B cell (primary cell): ENCODE measurements at regions of chr10 and their contacts with region 1.

Region 1: GRCh38 chr10:43138021-43138756 is at the start of gene CSGALNACT2:
- DNase-seq: peak; percentile 93
- ATAC-seq: peak; percentile 84
- H3K4me3 ChIP-seq: peak within 1 kb of the TSS; percentile 75 to 98 (median 83)
- H3K4me3 Mint-ChIP-seq: peak within 1 kb of the TSS; percentile 99
- H3K27ac ChIP-seq: peak within 1 kb of the TSS; percentile 92 to 95
- H3K27ac Mint-ChIP-seq: peak within 1 kb of the TSS; percentile 98
- H3K4me1 ChIP-seq: peaks cover 31 to 32% of the 10 kb centered on the region in 2 donors
- H3K4me1 Mint-ChIP-seq: peaks cover 48% of the 10 kb centered on the region
- H3K27me3 ChIP-seq: no peaks in the 10 kb centered on the region
- H3K27me3 Mint-ChIP-seq: no peaks in the 10 kb centered on the region
- CTCF ChIP-seq: peak; percentile 5
- total RNA-seq, gene CSGALNACT2: 24.0 and 25.0 TPM in 2 replicates

Region 2: GRCh38 chr10:42552493-42553407 is 585.4 kb before region 1 on chr10:
- CTCF ChIA-PET with region 1: interaction called, 3 read pairs
- POLR2A ChIA-PET with region 1: no interaction called
- intact Hi-C with region 1: loop called (anchors 2 kb)
- DNase-seq: peak; percentile 95
- ATAC-seq: peak; percentile 96
- H3K4me3 ChIP-seq: peak overlapping the region; percentile 46 to 98 (median 95)
- H3K4me3 Mint-ChIP-seq: peak overlapping the region; percentile 99
- H3K27ac ChIP-seq: peak overlapping the region; percentile 74 to 79
- H3K27ac Mint-ChIP-seq: peak overlapping the region; percentile 98
- H3K4me1 ChIP-seq: peaks cover 17 to 18% of the 10 kb centered on the region in 2 donors
- H3K4me1 Mint-ChIP-seq: peaks cover 34% of the 10 kb centered on the region
- H3K27me3 ChIP-seq: no peaks in the 10 kb centered on the region
- H3K27me3 Mint-ChIP-seq: no peaks in the 10 kb centered on the region
- CTCF ChIP-seq: no peak

Region 3: GRCh38 chr10:42782446-42783180 is 355.6 kb before region 1 on chr10 and contains the start of gene BMS1:
- CTCF ChIA-PET with region 1: no interaction called
- POLR2A ChIA-PET with region 1: no interaction called
- intact Hi-C with region 1: loop called (anchors 2 kb)
- DNase-seq: peak; percentile 92
- ATAC-seq: peak; percentile 86
- H3K4me3 ChIP-seq: peak within 1 kb of the TSS; percentile 70 to 93 (median 85)
- H3K4me3 Mint-ChIP-seq: peak within 1 kb of the TSS; percentile 96
- H3K27ac ChIP-seq: peak within 1 kb of the TSS; percentile 77 to 81
- H3K27ac Mint-ChIP-seq: peak within 1 kb of the TSS; percentile 89
- H3K4me1 ChIP-seq: peaks cover 12 to 13% of the 10 kb centered on the region in 2 donors
- H3K4me1 Mint-ChIP-seq: peaks cover 24% of the 10 kb centered on the region
- H3K27me3 ChIP-seq: no peaks in the 10 kb centered on the region
- H3K27me3 Mint-ChIP-seq: peaks cover 6% of the 10 kb centered on the region
- CTCF ChIP-seq: no peak
- total RNA-seq, gene BMS1: 17.1 and 17.5 TPM in 2 replicates

Region 4: GRCh38 chr10:43002596-43002995 is 135.6 kb before region 1 on chr10:
- CTCF ChIA-PET with region 1: no interaction called
- POLR2A ChIA-PET with region 1: no interaction called
- intact Hi-C with region 1: no loop called
- DNase-seq: no peak
- ATAC-seq: no peak
- H3K4me3 ChIP-seq: no peak overlapping the region
- H3K4me3 Mint-ChIP-seq: no peak overlapping the region
- H3K27ac ChIP-seq: no peak overlapping the region
- H3K27ac Mint-ChIP-seq: no peak overlapping the region
- H3K4me1 ChIP-seq: no peaks in the 10 kb centered on the region
- H3K4me1 Mint-ChIP-seq: no peaks in the 10 kb centered on the region
- H3K27me3 ChIP-seq: no peaks in the 10 kb centered on the region
- H3K27me3 Mint-ChIP-seq: no peaks in the 10 kb centered on the region
- CTCF ChIP-seq: no peak

Region 5: GRCh38 chr10:43113201-43114087 is 24.7 kb before region 1 on chr10:
- CTCF ChIA-PET with region 1: no interaction called
- POLR2A ChIA-PET with region 1: no interaction called
- intact Hi-C with region 1: no loop called
- DNase-seq: no peak
- ATAC-seq: no peak
- H3K4me3 ChIP-seq: no peak overlapping the region
- H3K4me3 Mint-ChIP-seq: no peak overlapping the region
- H3K27ac ChIP-seq: no peak overlapping the region
- H3K27ac Mint-ChIP-seq: no peak overlapping the region
- H3K4me1 ChIP-seq: peaks cover 0 to 7% of the 10 kb centered on the region in 2 donors
- H3K4me1 Mint-ChIP-seq: no peaks in the 10 kb centered on the region
- H3K27me3 ChIP-seq: no peaks in the 10 kb centered on the region
- H3K27me3 Mint-ChIP-seq: no peaks in the 10 kb centered on the region
- CTCF ChIP-seq: no peak

Region 6: DNA sequence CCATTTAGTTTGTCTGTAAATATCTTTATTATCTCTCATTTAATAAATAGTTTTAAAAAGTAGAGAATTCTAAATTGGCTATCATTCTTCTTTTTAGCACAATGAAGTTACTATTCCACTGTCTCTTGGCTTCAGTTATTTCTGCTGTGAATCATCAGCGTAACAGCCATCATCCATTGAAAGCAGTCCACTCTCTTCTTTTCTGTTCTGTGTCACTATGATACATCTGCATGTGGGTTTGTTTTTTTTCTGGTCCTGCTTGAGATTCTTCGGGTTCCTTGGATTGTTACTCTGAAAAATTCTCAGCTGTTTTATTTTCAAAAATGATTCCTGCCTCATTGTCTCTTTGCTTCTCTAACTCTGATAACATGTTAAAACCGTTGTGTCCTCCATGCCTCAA is 52.6 kb after region 1 on chr10:
- CTCF ChIA-PET with region 1: no interaction called
- POLR2A ChIA-PET with region 1: no interaction called
- intact Hi-C with region 1: no loop called
- DNase-seq: no peak
- ATAC-seq: no peak
- H3K4me3 ChIP-seq: no peak overlapping the region
- H3K4me3 Mint-ChIP-seq: no peak overlapping the region
- H3K27ac ChIP-seq: no peak overlapping the region
- H3K27ac Mint-ChIP-seq: no peak overlapping the region
- H3K4me1 ChIP-seq: no peaks in the 10 kb centered on the region
- H3K4me1 Mint-ChIP-seq: no peaks in the 10 kb centered on the region
- H3K27me3 ChIP-seq: no peaks in the 10 kb centered on the region
- H3K27me3 Mint-ChIP-seq: no peaks in the 10 kb centered on the region
- CTCF ChIP-seq: no peak

Region 7: GRCh38 chr10:43204943-43205671 is 66.9 kb after region 1 on chr10:
- CTCF ChIA-PET with region 1: interaction called, 7 read pairs
- POLR2A ChIA-PET with region 1: interaction called, 5 read pairs
- intact Hi-C with region 1: loop called (anchors 1 kb)
- DNase-seq: peak; percentile 69
- ATAC-seq: peak; percentile 26
- H3K4me3 ChIP-seq: no peak overlapping the region
- H3K4me3 Mint-ChIP-seq: no peak overlapping the region
- H3K27ac ChIP-seq: no peak overlapping the region
- H3K27ac Mint-ChIP-seq: peak overlapping the region; percentile 37
- H3K4me1 ChIP-seq: peaks cover 7 to 16% of the 10 kb centered on the region in 2 donors
- H3K4me1 Mint-ChIP-seq: peaks cover 9% of the 10 kb centered on the region
- H3K27me3 ChIP-seq: no peaks in the 10 kb centered on the region
- H3K27me3 Mint-ChIP-seq: no peaks in the 10 kb centered on the region
- CTCF ChIP-seq: peak; percentile 79

Region 8: GRCh38 chr10:43574001-43574892 is 436.1 kb after region 1 on chr10 and contains the start of gene ZNF239:
- CTCF ChIA-PET with region 1: no interaction called
- POLR2A ChIA-PET with region 1: no interaction called
- intact Hi-C with region 1: loop called (anchors 10 kb)
- DNase-seq: peak; percentile 88
- ATAC-seq: peak; percentile 95
- H3K4me3 ChIP-seq: peak within 1 kb of the TSS; percentile 42 to 72 (median 60)
- H3K4me3 Mint-ChIP-seq: peak within 1 kb of the TSS; percentile 93
- H3K27ac ChIP-seq: peak within 1 kb of the TSS; percentile 40 to 67
- H3K27ac Mint-ChIP-seq: peak within 1 kb of the TSS; percentile 94
- H3K4me1 ChIP-seq: peaks cover 17 to 27% of the 10 kb centered on the region in 2 donors
- H3K4me1 Mint-ChIP-seq: peaks cover 43% of the 10 kb centered on the region
- H3K27me3 ChIP-seq: no peaks in the 10 kb centered on the region
- H3K27me3 Mint-ChIP-seq: no peaks in the 10 kb centered on the region
- CTCF ChIP-seq: no peak
- total RNA-seq, gene ZNF239: 5.9 and 7.6 TPM in 2 replicates